Activated CD4-positive, alpha-beta memory T cell treated with anti-CD3 and anti-CD28 coated beads for 36 hours (primary cell): ENCODE measurements at regions of chr7 and their contacts with region 1.

Region 1: DNA sequence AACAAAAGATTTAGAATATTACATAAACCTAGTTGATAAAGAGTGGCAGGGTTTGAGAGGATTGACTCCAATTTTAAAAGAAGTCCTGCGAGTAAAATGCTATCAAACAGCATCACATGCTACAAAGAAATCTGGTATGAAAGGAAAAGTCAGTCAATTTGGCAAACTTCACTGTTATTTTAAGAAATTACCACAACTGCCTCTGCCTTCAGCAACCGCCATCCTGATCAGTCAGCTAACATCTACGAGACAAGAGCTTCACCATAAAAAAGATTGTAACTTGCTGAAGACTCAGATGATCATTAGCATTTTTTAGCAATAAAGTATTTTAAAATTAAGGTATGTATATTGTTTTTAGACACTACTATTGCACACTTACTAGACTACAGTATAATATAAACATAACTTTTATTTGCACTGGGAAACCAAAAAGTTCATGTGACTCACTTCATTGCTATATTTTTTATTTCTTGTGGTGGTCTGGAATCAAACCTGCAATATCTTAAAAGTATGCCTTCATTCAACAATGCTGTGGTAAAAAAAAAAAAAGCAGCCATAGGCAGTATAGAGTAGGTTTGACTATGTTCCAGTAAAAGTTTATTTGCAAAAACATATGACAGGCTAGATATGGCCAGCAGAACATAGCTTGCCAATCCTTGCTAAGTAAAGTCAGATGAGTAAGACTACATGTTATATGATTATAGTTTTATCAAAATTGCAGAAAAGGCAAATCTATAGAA is 74.4 kb downstream of the GLCCI1 start:
- DNase-seq: no peak
- H3K4me3 Mint-ChIP-seq: no peak overlapping the region
- H3K27ac Mint-ChIP-seq: peak overlapping the region; percentile 25
- H3K4me1 Mint-ChIP-seq: peaks cover 71% of the 10 kb centered on the region
- H3K27me3 Mint-ChIP-seq: no peaks in the 10 kb centered on the region

Region 2: DNA sequence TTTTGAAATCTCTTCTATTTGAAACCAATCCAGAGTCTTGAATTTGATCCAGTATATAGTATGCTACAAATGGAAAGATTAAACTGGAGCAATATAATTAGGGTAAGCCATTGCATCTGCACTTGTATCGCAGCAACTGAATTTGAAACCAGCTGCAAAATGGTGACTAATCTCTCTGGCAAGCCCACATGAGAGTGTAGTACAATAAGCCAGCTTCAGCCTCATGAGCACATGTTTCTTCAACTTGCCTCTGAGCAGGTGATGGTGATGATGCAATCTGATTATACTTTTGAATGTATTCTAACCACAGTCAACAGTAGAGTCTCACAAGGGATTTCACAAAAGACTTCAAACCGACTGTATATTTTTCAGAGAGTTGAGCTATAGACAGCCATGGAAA is 323.7 kb before region 1 on chr7:
- CTCF ChIA-PET with region 1: no interaction called
- POLR2A ChIA-PET with region 1: no interaction called
- intact Hi-C with region 1: loop called (anchors 2 kb)
- DNase-seq: peak; percentile 62
- H3K4me3 Mint-ChIP-seq: peak overlapping the region; percentile 8
- H3K27ac Mint-ChIP-seq: peak overlapping the region; percentile 45
- H3K4me1 Mint-ChIP-seq: peaks cover 17% of the 10 kb centered on the region
- H3K27me3 Mint-ChIP-seq: no peaks in the 10 kb centered on the region

Region 3: GRCh38 chr7:8058852-8059251 is 15.9 kb after region 1 on chr7:
- CTCF ChIA-PET with region 1: no interaction called
- POLR2A ChIA-PET with region 1: no interaction called
- intact Hi-C with region 1: loop called (anchors 2 kb)
- DNase-seq: no peak
- H3K4me3 Mint-ChIP-seq: no peak overlapping the region
- H3K27ac Mint-ChIP-seq: no peak overlapping the region
- H3K4me1 Mint-ChIP-seq: peaks cover 16% of the 10 kb centered on the region
- H3K27me3 Mint-ChIP-seq: no peaks in the 10 kb centered on the region

Region 4: GRCh38 chr7:8134089-8134733 is 91.2 kb after region 1 on chr7:
- CTCF ChIA-PET with region 1: no interaction called
- POLR2A ChIA-PET with region 1: no interaction called
- intact Hi-C with region 1: loop called (anchors 1 kb)
- DNase-seq: peak; percentile 66
- H3K4me3 Mint-ChIP-seq: peak overlapping the region; percentile 35
- H3K27ac Mint-ChIP-seq: peak overlapping the region; percentile 71
- H3K4me1 Mint-ChIP-seq: peaks cover 60% of the 10 kb centered on the region
- H3K27me3 Mint-ChIP-seq: no peaks in the 10 kb centered on the region

Region 5: DNA sequence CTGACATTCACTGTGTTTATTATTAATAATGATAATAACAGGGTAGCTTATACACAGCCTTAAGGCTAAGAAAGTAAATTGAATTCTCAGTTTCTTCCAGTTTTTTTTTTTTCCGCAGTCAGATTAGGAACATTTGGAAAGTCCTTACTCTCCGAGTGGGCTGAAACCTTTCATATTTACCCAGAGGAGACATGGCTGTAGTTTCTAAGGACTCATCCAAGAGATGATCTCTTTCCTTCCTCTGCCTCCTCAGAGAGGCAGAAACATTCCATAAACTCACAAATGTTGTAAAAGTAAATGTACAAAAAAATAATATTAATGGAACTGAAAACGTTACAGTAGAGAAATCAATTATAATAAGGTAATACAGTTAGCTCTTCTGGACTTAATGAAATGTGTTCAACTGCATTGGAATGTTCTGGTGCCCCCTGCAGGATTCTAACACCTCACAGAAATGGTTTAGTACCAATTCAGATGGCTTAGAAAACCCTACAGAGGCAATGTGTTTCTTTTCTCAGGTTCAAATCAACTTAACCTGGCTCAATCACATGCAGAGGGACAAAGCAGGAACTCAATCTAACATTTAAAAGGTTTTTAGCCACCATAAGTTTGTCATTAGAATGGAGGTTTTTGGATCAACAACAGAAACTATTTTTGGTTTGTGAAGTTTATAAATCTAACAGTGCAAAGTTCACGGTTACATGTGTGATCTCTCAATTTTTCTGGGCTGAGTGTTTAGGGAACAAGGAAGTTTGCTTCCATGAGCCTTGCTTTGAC is 147.3 kb after region 1 on chr7:
- CTCF ChIA-PET with region 1: interaction called, 13 read pairs
- POLR2A ChIA-PET with region 1: no interaction called
- intact Hi-C with region 1: loop called (anchors 2 kb)
- DNase-seq: peak; percentile 63
- H3K4me3 Mint-ChIP-seq: no peak overlapping the region
- H3K27ac Mint-ChIP-seq: no peak overlapping the region
- H3K4me1 Mint-ChIP-seq: peaks cover 13% of the 10 kb centered on the region
- H3K27me3 Mint-ChIP-seq: no peaks in the 10 kb centered on the region